Caco-2 (cell line): ENCODE measurements at regions of chr15 and their contacts with region 1.

Region 1: DNA sequence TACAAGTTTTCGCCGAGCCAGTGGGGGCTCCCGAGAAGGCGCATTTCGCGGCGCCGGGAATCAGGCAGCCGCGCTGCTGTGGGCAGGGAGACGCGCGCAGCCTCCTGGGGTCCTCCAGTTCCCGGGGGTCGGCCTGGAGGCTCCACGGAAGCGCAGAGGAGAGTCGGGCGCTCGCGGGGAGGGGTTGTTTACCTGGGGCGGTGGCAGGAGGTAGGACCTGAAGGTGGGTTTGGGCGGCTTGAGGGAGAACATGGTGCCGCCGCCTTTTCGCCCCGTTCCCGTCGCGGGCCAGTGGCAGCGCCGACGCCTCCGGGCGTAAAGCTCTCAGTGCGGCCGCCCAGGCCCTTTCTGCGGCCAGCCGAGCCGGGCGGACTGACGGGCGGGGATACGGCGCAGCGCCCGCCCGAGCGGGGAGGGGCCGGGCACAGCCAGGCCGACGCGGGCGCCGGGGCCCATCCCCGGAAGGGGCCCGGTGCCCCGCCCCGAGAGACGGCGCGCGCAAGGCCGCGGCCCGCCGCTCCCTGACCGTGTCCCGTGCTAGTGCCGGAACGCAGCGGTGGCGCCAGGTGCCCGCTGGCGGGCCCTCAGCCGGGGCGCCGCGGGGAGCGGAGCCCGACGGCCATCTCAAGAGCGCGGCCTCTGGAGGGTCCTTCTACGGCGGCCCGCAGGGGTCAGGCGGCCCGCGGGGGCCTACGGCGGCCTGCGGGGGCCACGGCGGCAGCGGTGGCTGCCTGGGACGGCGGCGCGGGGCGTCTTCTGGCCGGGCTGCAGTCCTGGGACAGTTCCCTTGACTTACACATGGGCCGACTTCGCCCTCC is at the start of gene MTMR10:
- DNase-seq: peak; percentile 82 to 94
- H3K4me3 ChIP-seq: peak within 1 kb of the TSS; percentile 97
- H3K4me3 Mint-ChIP-seq: peak within 1 kb of the TSS; percentile 86
- H3K27ac Mint-ChIP-seq: peak within 1 kb of the TSS; percentile 90
- H3K4me1 ChIP-seq: peaks cover 20% of the 10 kb centered on the region
- H3K4me1 Mint-ChIP-seq: peaks cover 20% of the 10 kb centered on the region
- H3K27me3 ChIP-seq: no peaks in the 10 kb centered on the region
- H3K27me3 Mint-ChIP-seq: no peaks in the 10 kb centered on the region
- CTCF ChIP-seq: no peak
- total RNA-seq, gene MTMR10: 27.5 and 33.2 TPM in 2 replicates

Region 2: GRCh38 chr15:30859091-30859874 is 132.2 kb before region 1 on chr15:
- CTCF ChIA-PET with region 1: no interaction called
- POLR2A ChIA-PET with region 1: no interaction called
- intact Hi-C with region 1: no loop called
- DNase-seq: peak in 1 of 2 experiments; percentile 32
- H3K4me3 ChIP-seq: no peak overlapping the region
- H3K4me3 Mint-ChIP-seq: no peak overlapping the region
- H3K27ac Mint-ChIP-seq: no peak overlapping the region
- H3K4me1 ChIP-seq: no peaks in the 10 kb centered on the region
- H3K4me1 Mint-ChIP-seq: no peaks in the 10 kb centered on the region
- H3K27me3 ChIP-seq: no peaks in the 10 kb centered on the region
- H3K27me3 Mint-ChIP-seq: no peaks in the 10 kb centered on the region
- CTCF ChIP-seq: peak; percentile 75 to 77

Region 3: GRCh38 chr15:30903497-30904201 is 87.8 kb before region 1 on chr15 and contains the start of gene FAN1:
- CTCF ChIA-PET with region 1: no interaction called
- POLR2A ChIA-PET with region 1: interaction called, 6 read pairs
- intact Hi-C with region 1: loop called (anchors 5 kb)
- DNase-seq: peak; percentile 91 to 94
- H3K4me3 ChIP-seq: peak within 1 kb of the TSS; percentile 96
- H3K4me3 Mint-ChIP-seq: peak within 1 kb of the TSS; percentile 97
- H3K27ac Mint-ChIP-seq: peak within 1 kb of the TSS; percentile 91
- H3K4me1 ChIP-seq: no peaks in the 10 kb centered on the region
- H3K4me1 Mint-ChIP-seq: peaks cover 6% of the 10 kb centered on the region
- H3K27me3 ChIP-seq: no peaks in the 10 kb centered on the region
- H3K27me3 Mint-ChIP-seq: no peaks in the 10 kb centered on the region
- CTCF ChIP-seq: no peak
- total RNA-seq, gene FAN1: 24.9 and 26.6 TPM in 2 replicates

Region 4: DNA sequence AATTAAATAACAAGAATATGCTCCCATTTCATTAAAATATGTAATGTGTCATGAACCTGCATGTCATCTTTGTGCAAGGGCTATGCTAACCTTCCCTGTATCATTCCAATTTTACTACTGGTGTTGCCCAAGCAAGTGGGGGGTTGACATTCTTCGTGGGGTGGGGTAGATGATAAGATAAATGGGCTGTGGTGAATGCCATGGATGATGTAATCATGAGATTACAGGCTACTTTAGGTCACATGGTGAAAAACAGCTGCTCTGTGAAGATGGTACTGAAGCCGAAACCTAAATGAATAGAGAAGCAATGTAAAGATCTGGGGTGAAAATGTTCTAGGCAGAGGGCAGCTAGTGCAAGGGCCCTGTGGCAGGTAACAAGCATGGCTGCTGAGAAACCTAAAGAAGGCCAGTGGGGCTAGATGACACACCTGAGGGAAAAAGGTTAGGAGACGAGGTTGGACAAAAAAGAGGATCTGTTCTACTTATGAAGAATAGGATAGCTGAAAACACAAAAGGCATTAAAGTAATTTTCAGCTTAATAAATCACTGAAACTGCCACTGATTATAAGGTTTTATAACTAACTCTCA is 35.2 kb before region 1 on chr15:
- CTCF ChIA-PET with region 1: no interaction called
- POLR2A ChIA-PET with region 1: interaction called, 3 read pairs
- intact Hi-C with region 1: loop called (anchors 1 kb)
- DNase-seq: peak; percentile 75 to 78
- H3K4me3 ChIP-seq: no peak overlapping the region
- H3K4me3 Mint-ChIP-seq: peak overlapping the region; percentile 13
- H3K27ac Mint-ChIP-seq: peak overlapping the region; percentile 86
- H3K4me1 ChIP-seq: peaks cover 22% of the 10 kb centered on the region
- H3K4me1 Mint-ChIP-seq: peaks cover 17% of the 10 kb centered on the region
- H3K27me3 ChIP-seq: no peaks in the 10 kb centered on the region
- H3K27me3 Mint-ChIP-seq: no peaks in the 10 kb centered on the region
- CTCF ChIP-seq: no peak

Region 5: GRCh38 chr15:30973379-30973778 is 18.1 kb before region 1 on chr15:
- CTCF ChIA-PET with region 1: no interaction called
- POLR2A ChIA-PET with region 1: no interaction called
- intact Hi-C with region 1: no loop called
- DNase-seq: no peak
- H3K4me3 ChIP-seq: no peak overlapping the region
- H3K4me3 Mint-ChIP-seq: no peak overlapping the region
- H3K27ac Mint-ChIP-seq: no peak overlapping the region
- H3K4me1 ChIP-seq: peaks cover 3% of the 10 kb centered on the region; the same call in 1 of the 2 replicates
- H3K4me1 Mint-ChIP-seq: peaks cover 17% of the 10 kb centered on the region
- H3K27me3 ChIP-seq: no peaks in the 10 kb centered on the region
- H3K27me3 Mint-ChIP-seq: no peaks in the 10 kb centered on the region
- CTCF ChIP-seq: no peak

Region 6: GRCh38 chr15:31013538-31014228 is 22.2 kb after region 1 on chr15:
- CTCF ChIA-PET with region 1: interaction called, 4 read pairs
- POLR2A ChIA-PET with region 1: interaction called, 16 read pairs
- intact Hi-C with region 1: loop called (anchors 1 kb)
- DNase-seq: no peak
- H3K4me3 ChIP-seq: no peak overlapping the region
- H3K4me3 Mint-ChIP-seq: peak overlapping the region; percentile 17
- H3K27ac Mint-ChIP-seq: peak overlapping the region; percentile 83
- H3K4me1 ChIP-seq: peaks cover 21% of the 10 kb centered on the region
- H3K4me1 Mint-ChIP-seq: peaks cover 25% of the 10 kb centered on the region
- H3K27me3 ChIP-seq: no peaks in the 10 kb centered on the region
- H3K27me3 Mint-ChIP-seq: peaks cover 4% of the 10 kb centered on the region
- CTCF ChIP-seq: no peak

Region 7: DNA sequence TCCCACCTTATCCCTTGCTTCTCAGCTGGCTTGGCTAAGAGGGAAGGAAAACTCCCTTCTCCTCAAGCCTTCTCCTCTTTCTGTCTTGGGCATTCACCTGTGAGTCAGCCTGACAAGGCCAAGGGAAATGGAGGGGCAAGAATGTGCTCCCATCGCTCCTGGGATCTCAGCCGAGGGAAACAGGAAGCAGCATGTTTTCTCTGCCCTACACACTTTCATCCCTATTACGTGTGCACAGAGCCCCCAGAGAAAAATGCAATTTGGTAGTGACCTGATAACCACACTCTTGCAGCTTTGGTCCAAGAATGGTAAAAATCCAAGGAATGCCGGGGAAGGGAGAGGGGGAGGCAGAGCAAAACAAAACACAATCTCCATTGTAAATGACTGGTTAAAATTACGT is 32.9 kb after region 1 on chr15:
- CTCF ChIA-PET with region 1: interaction called, 7 read pairs
- POLR2A ChIA-PET with region 1: interaction called, 39 read pairs
- intact Hi-C with region 1: loop called (anchors 1 kb)
- DNase-seq: peak; percentile 86 to 93
- H3K4me3 ChIP-seq: 0 out of 2 replicates have a peak overlapping the region, but pooled peaks have one; percentile 2
- H3K4me3 Mint-ChIP-seq: peak overlapping the region; percentile 32
- H3K27ac Mint-ChIP-seq: peak overlapping the region; percentile 81
- H3K4me1 ChIP-seq: peaks cover 37% of the 10 kb centered on the region
- H3K4me1 Mint-ChIP-seq: peaks cover 47% of the 10 kb centered on the region
- H3K27me3 ChIP-seq: no peaks in the 10 kb centered on the region
- H3K27me3 Mint-ChIP-seq: no peaks in the 10 kb centered on the region
- CTCF ChIP-seq: no peak

Region 8: DNA sequence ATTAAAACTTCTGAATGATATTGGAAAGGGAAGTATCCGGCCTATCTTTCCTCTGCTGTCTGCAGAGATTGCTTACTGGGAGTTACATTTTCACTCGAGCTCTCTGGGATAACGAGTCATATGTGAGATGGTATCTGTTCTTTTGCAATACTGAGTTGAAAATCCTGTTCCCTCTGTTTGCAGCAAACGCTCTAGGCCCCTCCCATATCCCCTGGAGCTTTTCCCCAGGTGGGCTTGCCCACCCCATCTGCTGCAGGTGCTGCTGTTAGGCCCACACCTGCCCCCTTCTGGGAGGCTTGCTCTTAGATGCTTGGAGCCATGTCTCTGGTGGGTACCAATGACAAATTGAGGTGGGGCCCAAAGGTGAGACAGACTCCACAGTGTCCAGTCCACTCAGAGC is 42.7 kb after region 1 on chr15:
- CTCF ChIA-PET with region 1: interaction called, 8 read pairs
- POLR2A ChIA-PET with region 1: interaction called, 3 read pairs
- intact Hi-C with region 1: loop called (anchors 1 kb)
- DNase-seq: peak; percentile 83 to 86
- H3K4me3 ChIP-seq: no peak overlapping the region
- H3K4me3 Mint-ChIP-seq: no peak overlapping the region
- H3K27ac Mint-ChIP-seq: peak overlapping the region; percentile 29
- H3K4me1 ChIP-seq: peaks cover 18% of the 10 kb centered on the region
- H3K4me1 Mint-ChIP-seq: peaks cover 21% of the 10 kb centered on the region
- H3K27me3 ChIP-seq: no peaks in the 10 kb centered on the region
- H3K27me3 Mint-ChIP-seq: no peaks in the 10 kb centered on the region
- CTCF ChIP-seq: peak; percentile 39 to 43